ENCODE measurements at regions of chr10 and their contacts with region 1.

Region 1: DNA sequence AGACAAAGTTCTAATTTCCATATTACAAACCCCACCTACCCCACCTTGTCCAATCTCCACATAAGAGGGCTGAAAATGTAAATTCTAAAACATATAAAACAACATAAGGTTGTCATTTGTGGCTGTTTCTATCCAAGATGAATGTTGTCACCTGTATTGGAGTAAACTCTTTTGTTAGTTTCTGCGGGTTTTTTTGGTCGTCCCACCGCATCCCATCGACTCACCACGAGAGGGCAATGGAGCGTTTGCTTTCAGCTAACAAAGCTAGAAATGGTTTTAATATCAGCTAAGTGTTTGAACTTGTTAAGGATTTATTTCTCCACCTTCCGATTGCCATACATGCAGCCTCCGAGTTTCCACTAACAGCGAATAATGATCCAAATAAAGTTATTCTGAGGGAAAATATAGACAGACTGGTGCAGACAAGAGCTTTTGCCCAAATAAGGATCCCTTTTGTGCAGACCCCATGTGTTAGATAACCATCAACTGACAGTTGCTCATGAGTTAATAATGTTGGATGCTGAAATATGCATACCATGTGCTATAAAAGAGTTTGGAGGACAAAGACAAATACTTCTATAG is 137.2 kb downstream of the ARID5B start:
- DNase-seq: peak; percentile 68
- H3K4me3 ChIP-seq: peak overlapping the region; percentile 53
- H3K27ac ChIP-seq: peak overlapping the region; percentile 44
- H3K4me1 ChIP-seq: peaks cover 41% of the 10 kb centered on the region
- H3K27me3 ChIP-seq: no peaks in the 10 kb centered on the region
- CTCF ChIP-seq: peak; percentile 91

Region 2: GRCh38 chr10:61882621-61883373 is 155.9 kb before region 1 on chr10:
- intact Hi-C with region 1: no loop called
- DNase-seq: no peak
- H3K4me3 ChIP-seq: no peak overlapping the region
- H3K27ac ChIP-seq: no peak overlapping the region
- H3K4me1 ChIP-seq: no peaks in the 10 kb centered on the region
- H3K27me3 ChIP-seq: no peaks in the 10 kb centered on the region
- CTCF ChIP-seq: no peak

Region 3: DNA sequence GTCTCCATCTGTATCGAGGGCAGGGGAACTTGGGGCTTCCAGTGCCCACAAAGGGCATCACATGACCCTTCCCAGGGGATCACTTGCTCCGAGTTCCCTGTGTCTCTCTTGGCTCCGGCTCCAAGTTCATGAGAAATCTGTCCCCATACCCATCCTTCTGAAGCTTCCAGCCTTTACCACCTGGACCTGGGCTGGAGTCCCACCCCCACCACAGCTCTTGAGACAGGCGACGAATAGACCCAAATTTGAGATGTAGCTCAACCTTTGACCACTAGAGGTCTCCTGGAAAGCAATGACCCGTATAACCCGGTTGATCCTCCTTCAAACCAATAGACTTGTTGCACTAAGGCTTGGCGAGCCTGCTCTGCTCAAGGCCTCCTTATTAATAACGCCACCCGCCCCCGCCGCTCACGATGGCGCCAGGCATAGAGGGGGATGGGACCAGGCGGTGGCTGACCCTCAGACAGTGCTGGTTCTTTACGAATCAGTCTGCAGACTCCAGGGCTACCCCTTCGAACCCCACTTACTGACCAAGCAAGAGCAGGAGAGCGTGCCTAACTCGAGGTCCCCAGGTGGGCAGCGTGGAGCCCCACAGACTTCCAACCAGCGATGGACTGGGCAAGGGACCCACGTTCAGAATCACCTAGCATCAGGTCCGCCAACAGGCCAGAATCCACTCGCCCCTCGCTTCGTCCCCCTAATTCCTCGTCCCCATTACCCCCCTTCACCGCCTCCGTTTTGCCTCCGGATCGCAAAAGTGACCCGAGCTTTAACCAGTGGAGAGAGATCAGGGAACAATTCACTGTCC is 141.6 kb before region 1 on chr10:
- intact Hi-C with region 1: loop called (anchors 5 kb)
- DNase-seq: peak; percentile 38
- H3K4me3 ChIP-seq: peak overlapping the region; percentile 65
- H3K27ac ChIP-seq: peak overlapping the region; percentile 41
- H3K4me1 ChIP-seq: peaks cover 45% of the 10 kb centered on the region
- H3K27me3 ChIP-seq: no peaks in the 10 kb centered on the region
- CTCF ChIP-seq: peak; percentile 77

Region 4: GRCh38 chr10:62244780-62245467 is 206.2 kb after region 1 on chr10:
- intact Hi-C with region 1: loop called (anchors 2 kb)
- DNase-seq: no peak
- H3K4me3 ChIP-seq: no peak overlapping the region
- H3K27ac ChIP-seq: no peak overlapping the region
- H3K4me1 ChIP-seq: peaks cover 10% of the 10 kb centered on the region
- H3K27me3 ChIP-seq: no peaks in the 10 kb centered on the region
- CTCF ChIP-seq: peak; percentile 92